Common myeloid progenitor, CD34-positive (primary cell): ENCODE measurements at regions of chr9 and their contacts with region 1.

Region 1: DNA sequence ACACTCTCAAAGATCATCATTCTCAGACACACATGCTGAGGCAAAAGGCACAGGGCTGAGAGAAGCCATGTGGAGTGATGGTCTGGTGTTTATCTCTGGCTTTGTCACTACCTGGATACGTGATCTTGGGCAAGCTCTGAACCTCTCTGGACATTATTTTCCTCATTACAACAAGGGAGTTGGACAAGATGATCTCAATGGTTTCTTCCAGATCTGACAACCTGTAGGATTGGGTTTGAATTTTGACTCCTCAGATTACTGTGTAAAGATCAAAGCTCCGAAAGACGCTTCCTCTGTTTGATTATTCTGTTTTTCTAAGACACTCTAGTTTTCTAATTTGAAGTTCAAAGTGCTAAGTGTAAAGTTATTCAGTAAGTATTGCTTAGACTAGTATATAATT is 20.0 kb downstream of the NUDT2 start:
- DNase-seq: no peak
- H3K4me3 ChIP-seq: no peak overlapping the region
- H3K27ac ChIP-seq: no peak overlapping the region
- H3K4me1 ChIP-seq: no peaks in the 10 kb centered on the region
- H3K27me3 ChIP-seq: no peaks in the 10 kb centered on the region

Region 2: GRCh38 chr9:34332076-34332964 is 17.0 kb before region 1 on chr9:
- CTCF ChIA-PET with region 1: interaction called, 10 read pairs
- POLR2A ChIA-PET with region 1: no interaction called
- DNase-seq: peak; percentile 60 to 74 (median 66)
- H3K4me3 ChIP-seq: no peak overlapping the region
- H3K27ac ChIP-seq: no peak overlapping the region
- H3K4me1 ChIP-seq: peaks cover 5 to 29% (median 18%) of the 10 kb centered on the region in 4 experiments
- H3K27me3 ChIP-seq: no peaks in the 10 kb centered on the region

Region 3: DNA sequence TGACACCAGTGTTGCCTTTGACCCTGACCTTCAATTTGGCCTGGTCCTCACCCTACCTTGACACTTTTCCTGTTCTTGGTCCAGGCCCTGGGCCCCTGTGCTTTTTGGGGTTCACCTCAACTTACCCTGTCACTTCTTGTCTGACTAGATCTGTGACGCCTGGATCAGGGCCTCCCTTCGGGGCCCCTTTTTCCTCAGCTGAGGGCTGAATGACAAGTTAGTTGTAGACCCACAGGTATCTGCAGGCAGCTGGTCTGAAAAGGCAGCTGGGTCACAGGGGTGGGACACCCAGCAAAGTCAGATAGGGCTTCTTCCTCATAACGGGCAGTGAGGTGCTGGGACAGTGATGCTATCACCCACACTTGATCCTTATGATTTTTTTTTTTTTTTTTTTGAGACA is 37.3 kb after region 1 on chr9:
- CTCF ChIA-PET with region 1: no interaction called
- POLR2A ChIA-PET with region 1: no interaction called
- DNase-seq: no peak
- H3K4me3 ChIP-seq: no peak overlapping the region
- H3K27ac ChIP-seq: no peak overlapping the region
- H3K4me1 ChIP-seq: no peaks in the 10 kb centered on the region
- H3K27me3 ChIP-seq: peaks cover 0 to 6% (median 4%) of the 10 kb centered on the region in 5 experiments

Region 4: GRCh38 chr9:34458013-34458958 is 109.0 kb after region 1 on chr9 and contains the starts of genes DNAI1 and FAM219A:
- CTCF ChIA-PET with region 1: no interaction called
- POLR2A ChIA-PET with region 1: no interaction called
- DNase-seq: peak; percentile 98 to 99 (median 99)
- H3K4me3 ChIP-seq: peak within 1 kb of the TSS in 6 of 7 experiments; percentile 45 to 82 (median 68)
- H3K27ac ChIP-seq: no peak within 1 kb of the TSS
- H3K4me1 ChIP-seq: peaks cover 0 to 43% (median 30%) of the 10 kb centered on the region in 4 experiments
- H3K27me3 ChIP-seq: peaks cover 0 to 7% (median 2%) of the 10 kb centered on the region in 5 experiments